GM10248 (cell line): ENCODE measurements at regions of chr1 and their contacts with region 1.

Region 1: GRCh38 chr1:151238467-151238739 is 16.1 kb upstream of the PSMD4 start:
- DNase-seq: no peak
- CTCF ChIP-seq: no peak

Region 2: GRCh38 chr1:151227634-151228033 is 10.8 kb before region 1 on chr1:
- CTCF ChIA-PET with region 1: interaction called, 13 read pairs
- POLR2A ChIA-PET with region 1: no interaction called
- DNase-seq: no peak
- CTCF ChIP-seq: no peak